GM13976 (cell line): ENCODE measurements at regions of chr6 and their contacts with region 1.

Region 1: DNA sequence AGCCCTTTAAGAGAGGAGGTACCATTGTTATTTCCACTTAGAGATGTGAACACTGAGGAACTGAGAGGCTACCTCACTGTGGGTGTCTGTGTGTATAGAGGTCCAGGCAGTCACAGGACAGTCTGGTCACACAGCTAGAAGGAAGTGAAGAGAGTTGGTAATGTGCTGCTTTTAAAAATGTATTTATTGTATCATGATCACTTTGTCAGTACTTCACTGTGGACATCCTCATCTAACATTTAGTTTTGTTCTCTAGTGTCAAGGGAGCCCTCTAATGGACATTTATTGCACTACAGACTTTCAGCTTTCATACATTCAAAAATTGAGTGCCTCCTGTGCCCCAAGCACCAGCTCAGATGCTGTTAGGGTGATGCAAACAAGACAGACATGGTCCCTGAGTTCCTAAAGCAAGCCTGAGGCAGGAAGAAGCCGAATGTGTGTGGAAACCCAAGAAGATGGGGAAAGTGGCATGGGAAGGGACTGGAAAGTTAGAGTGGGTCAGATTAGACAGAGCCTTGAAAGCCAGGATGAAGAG is 123.0 kb downstream of the SLC16A10 start:
- DNase-seq: peak; percentile 69
- CTCF ChIP-seq: peak; percentile 70

Region 2: DNA sequence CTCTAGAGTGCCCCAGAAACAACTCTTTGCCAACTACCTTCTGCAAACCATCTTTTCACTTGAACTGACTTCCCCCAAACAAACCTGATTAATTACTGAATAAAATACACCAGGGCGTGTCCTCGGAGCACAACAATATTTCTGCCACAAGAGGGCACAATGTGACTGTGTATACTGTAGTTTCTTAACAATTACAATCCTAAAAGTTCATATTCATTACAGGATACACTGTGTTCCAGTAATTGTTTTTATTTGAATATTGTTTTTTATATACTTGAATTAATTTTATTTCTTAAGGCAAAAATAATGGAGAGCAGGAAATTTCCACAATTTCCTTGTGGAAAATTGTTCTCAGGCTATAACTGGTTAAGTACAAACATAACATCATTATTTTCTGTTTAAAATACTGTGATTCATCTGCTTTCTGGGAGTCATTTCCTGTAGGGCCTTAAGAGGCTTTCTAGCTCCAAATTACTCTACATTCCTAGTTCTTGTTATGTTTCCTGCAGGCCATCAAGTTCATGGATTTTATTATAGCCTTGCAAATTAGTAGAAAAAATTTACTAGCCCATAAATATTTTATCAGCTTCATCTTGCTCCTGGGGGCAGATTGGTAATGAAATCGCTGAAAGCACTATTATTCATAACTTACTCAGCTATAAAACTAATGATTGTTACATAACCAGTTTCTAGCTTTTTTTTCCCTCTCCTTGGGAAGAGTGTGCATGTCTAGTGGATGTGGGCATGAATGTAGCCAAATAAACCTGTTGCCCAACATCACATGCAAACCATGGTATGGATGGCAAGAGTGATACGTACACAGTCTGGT is 681.9 kb before region 1 on chr6:
- in situ Hi-C with region 1: loop called (anchors 25 kb)
- DNase-seq: peak; percentile 65
- CTCF ChIP-seq: peak; percentile 64

Region 3: DNA sequence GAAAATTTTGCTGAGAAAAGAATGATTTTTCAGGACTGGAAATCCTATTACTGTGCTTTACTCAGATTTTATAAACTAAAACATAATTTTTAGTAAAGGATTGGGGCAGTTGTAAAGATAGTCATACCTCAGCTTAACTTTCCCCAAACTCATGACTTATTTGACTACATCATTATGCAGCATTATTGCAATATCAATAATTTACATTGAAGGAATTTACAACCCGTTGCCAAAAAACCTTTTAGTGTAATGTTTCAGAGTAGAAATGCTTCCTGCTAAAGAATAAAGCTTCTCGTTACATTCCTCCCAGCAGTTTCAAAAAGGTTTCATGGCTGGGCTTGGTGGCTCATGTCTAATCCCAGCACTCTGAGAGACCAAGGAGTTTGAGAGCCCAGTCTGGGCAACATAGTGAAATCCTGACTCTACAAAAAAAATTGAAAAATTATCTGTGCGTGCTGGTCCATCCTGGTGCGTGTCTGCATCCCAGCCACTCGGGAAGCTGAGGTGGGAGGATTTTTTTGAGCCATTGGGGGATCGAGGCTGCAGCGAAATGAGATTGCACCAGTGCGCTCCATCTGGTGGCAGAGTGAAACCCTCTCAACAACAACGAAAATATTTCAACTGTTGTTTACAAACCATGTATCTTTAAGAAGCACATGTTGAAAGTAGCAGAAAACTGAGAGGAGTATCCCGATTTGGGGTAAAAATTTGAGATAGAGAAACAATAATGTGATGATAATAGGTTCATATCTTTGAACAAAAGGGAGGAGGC is 331.3 kb before region 1 on chr6:
- in situ Hi-C with region 1: no loop called
- DNase-seq: peak; percentile 35
- CTCF ChIP-seq: peak; percentile 51

Region 4: DNA sequence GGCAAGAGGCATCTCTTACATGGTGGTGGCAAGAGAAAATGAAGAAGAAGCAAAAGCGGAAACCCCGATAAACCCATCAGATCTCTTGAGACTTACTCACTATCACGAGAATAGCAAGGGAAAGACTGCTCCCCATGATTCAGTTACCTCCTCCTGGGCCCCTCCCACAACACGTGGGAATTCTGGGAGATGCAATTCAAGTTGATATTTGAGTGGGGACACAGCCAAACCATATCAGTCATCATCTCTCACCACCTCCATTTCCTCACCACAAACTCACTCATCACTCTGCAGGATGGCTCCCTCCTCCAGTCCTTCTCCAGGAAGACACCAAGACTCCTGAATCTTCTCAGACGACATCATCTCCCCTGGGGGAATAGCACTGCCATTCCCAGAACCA is 148.8 kb before region 1 on chr6:
- in situ Hi-C with region 1: loop called (anchors 10 kb)
- DNase-seq: no peak
- CTCF ChIP-seq: no peak

Region 5: GRCh38 chr6:111322153-111322552 is 111.9 kb after region 1 on chr6:
- in situ Hi-C with region 1: no loop called
- DNase-seq: no peak
- CTCF ChIP-seq: no peak

Region 6: DNA sequence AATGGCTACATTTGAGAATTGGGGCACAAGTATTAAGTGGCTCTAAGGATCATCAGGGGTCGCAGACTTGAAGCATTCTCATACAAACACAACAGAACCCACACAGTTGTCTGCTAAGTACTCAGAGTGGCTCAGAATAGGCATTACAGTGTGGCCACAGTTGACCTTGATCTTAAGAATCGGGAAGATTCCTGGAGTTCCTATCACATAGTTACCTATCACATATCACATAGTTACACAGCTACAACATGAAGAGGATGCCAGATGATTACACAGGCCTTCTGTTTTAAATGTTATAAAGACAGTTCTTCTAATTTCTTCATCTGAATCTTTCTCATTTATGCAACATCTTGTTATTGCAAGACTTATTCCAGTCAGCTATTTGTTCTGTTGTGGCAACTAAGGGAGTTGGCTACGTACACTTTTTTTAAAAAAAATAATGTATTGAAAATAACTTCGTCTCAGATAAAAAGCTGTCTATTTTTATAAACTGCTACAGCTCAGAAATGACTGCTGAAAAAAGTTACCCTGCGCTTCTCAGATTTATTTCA is 143.7 kb after region 1 on chr6:
- in situ Hi-C with region 1: no loop called
- DNase-seq: no peak
- CTCF ChIP-seq: no peak